ENCODE measurements at regions of chr1 and their contacts with region 1.

Region 1: DNA sequence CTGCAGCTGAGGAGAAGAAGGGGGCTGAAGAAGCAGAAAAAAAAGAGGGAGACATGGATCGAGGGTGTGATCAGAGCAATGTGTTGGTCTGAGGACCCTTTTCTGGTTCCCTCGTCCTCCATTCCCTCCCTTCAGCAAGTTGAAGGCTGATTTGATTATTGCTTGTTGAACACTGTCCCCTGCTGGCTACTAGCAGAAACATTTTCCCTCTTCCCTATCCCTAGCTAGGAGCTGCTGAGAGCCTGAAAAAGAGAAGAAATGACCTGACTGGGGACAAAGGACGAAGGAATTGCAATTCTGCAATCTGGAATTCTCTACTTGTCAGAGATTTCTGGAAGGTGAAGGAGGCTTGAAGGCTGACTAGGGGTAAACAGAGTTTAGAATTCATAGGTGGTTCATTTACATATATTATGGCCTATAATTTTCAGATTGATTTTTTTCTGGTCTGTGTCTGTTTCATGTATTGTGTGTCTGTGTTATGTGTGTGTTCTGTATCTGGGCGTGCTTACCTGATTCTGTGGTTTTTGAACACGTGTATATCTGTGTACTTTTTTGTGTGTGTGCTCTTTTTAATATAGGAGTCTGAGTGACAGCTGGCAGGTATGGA is 9.8 kb downstream of the NHLH1 start:
- DNase-seq: peak; percentile 36
- ATAC-seq: peak; percentile 92
- H3K4me3 ChIP-seq: no peak overlapping the region
- H3K27ac ChIP-seq: no peak overlapping the region
- H3K4me1 ChIP-seq: peaks cover 15% of the 10 kb centered on the region
- H3K27me3 ChIP-seq: no peaks in the 10 kb centered on the region
- CTCF ChIP-seq: peak; percentile 96 to 99 (median 99); a peak in 5 of 6 replicates
- EP300 ChIP-seq: no peak
- POLR2A ChIP-seq: no peak
- RAD21 ChIP-seq: peak; percentile 95

Region 2: GRCh38 chr1:160085686-160086455 is 290.8 kb before region 1 on chr1:
- CTCF ChIA-PET with region 1: interaction called, 46 read pairs
- POLR2A ChIA-PET with region 1: no interaction called
- RAD21 ChIA-PET with region 1: interaction called, 22 read pairs
- SMC1A ChIA-PET with region 1: interaction called, 10 read pairs
- in situ Hi-C with region 1: no loop called
- intact Hi-C with region 1: no loop called
- DNase-seq: no peak
- ATAC-seq: peak; percentile 87
- H3K4me3 ChIP-seq: no peak overlapping the region
- H3K27ac ChIP-seq: no peak overlapping the region
- H3K4me1 ChIP-seq: no peaks in the 10 kb centered on the region
- H3K27me3 ChIP-seq: peaks cover 0 to 2% of the 10 kb centered on the region in 2 experiments; a peak in 3 of 4 replicates
- CTCF ChIP-seq: peak; percentile 82 to 89 (median 88)
- EP300 ChIP-seq: no peak
- POLR2A ChIP-seq: no peak
- RAD21 ChIP-seq: peak; percentile 59

Region 3: DNA sequence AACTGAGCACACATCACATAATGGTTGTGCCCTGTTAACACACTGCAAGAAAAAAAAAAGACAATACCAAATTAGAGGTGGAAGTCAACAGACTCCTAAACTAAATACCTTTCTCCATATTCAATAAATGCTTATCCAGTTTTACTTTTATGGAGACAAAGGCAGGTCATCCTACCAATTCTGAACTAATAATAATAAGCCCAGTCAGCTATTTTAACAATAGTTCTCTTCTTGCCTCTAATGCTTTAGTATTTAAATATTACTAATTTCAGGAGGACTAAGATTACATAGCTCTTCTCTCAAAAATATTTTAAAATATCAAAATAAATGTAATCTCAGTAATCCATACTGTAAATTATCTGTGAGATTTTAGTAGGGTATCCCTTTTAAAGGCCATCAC is 44.1 kb before region 1 on chr1:
- CTCF ChIA-PET with region 1: interaction called, 18 read pairs
- POLR2A ChIA-PET with region 1: no interaction called
- RAD21 ChIA-PET with region 1: interaction called, 3 read pairs
- SMC1A ChIA-PET with region 1: interaction called, 4 read pairs
- in situ Hi-C with region 1: no loop called
- intact Hi-C with region 1: no loop called
- DNase-seq: no peak
- ATAC-seq: no peak
- H3K4me3 ChIP-seq: no peak overlapping the region
- H3K27ac ChIP-seq: no peak overlapping the region
- H3K4me1 ChIP-seq: no peaks in the 10 kb centered on the region
- H3K27me3 ChIP-seq: no peaks in the 10 kb centered on the region
- CTCF ChIP-seq: no peak
- EP300 ChIP-seq: no peak
- POLR2A ChIP-seq: no peak
- RAD21 ChIP-seq: no peak

Region 4: DNA sequence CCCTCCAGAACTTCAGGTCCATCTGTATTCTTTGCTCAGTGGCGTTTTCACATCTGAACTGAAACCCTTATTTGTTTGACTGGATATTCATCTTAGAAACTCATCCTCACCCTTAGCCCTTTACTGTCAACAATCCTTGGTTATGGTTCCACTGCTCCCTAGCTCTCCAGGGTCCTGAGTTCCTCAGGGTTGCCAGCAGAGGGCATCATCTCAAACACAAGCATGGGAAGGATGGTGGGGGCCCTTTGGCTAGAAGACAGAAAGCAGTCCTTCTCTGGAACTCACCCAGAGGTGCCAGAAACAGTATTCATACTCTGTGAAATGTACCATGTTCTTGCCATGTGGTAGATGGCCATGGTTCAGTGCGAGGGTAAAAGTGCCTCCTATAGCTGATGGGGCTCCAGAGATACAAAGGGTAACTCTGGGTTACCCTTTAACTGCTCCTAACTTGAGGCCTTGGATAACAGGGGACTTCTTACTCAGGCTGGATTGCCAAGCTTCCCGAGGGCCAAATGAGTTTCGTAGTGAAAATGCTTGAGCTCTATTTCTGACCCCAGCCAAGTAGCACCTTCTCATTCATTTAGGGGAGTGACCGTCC is 22.1 kb before region 1 on chr1:
- CTCF ChIA-PET with region 1: interaction called, 98 read pairs
- POLR2A ChIA-PET with region 1: interaction called, 3 read pairs
- RAD21 ChIA-PET with region 1: interaction called, 4 read pairs
- SMC1A ChIA-PET with region 1: interaction called, 16 read pairs
- in situ Hi-C with region 1: no loop called
- intact Hi-C with region 1: no loop called
- DNase-seq: no peak
- ATAC-seq: peak; percentile 82
- H3K4me3 ChIP-seq: no peak overlapping the region
- H3K27ac ChIP-seq: no peak overlapping the region
- H3K4me1 ChIP-seq: no peaks in the 10 kb centered on the region
- H3K27me3 ChIP-seq: no peaks in the 10 kb centered on the region
- CTCF ChIP-seq: peak; percentile 29 to 55 (median 55)
- EP300 ChIP-seq: no peak
- POLR2A ChIP-seq: no peak
- RAD21 ChIP-seq: peak; percentile 38; the same call in 1 of the 2 replicates

Region 5: DNA sequence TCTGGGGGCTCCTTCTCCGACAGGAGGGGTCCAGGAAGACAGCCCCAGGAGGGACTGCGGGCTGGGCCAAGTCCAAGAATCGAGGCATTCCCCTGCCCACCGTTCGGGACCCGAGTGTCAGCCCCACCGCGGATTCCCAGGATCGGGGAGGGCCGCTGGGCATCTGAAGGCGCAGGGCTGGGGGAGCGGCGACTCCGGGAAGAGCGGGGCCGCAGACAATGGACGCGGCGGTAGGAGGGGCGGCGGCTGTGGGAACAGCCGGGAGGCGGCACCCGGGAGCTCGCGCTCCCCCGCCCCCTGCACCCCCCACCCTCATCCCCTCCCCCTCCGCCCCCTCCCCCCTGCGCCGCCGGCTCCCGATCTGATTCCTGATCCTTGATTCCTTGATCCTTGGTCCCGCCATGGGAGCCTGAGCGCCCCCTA is 23.6 kb after region 1 on chr1 and contains the start of gene VANGL2:
- CTCF ChIA-PET with region 1: interaction called, 15 read pairs
- POLR2A ChIA-PET with region 1: no interaction called
- RAD21 ChIA-PET with region 1: interaction called, 6 read pairs
- SMC1A ChIA-PET with region 1: interaction called, 6 read pairs
- in situ Hi-C with region 1: no loop called
- intact Hi-C with region 1: no loop called
- DNase-seq: no peak
- ATAC-seq: peak; percentile 41
- H3K4me3 ChIP-seq: peak within 1 kb of the TSS; percentile 63
- H3K27ac ChIP-seq: no peak within 1 kb of the TSS
- H3K4me1 ChIP-seq: no peaks in the 10 kb centered on the region
- H3K27me3 ChIP-seq: peaks cover 0 to 4% of the 10 kb centered on the region in 2 experiments; a peak in 2 of 4 replicates
- CTCF ChIP-seq: no peak
- EP300 ChIP-seq: peak in 1 of 2 experiments; percentile 100; a peak in 2 of 4 replicates
- POLR2A ChIP-seq: no peak
- RAD21 ChIP-seq: no peak
- polyA plus RNA-seq, gene VANGL2: 0.10 to 0.13 TPM